ENCODE measurements at regions of chr17 and their contacts with region 1.

Region 1: DNA sequence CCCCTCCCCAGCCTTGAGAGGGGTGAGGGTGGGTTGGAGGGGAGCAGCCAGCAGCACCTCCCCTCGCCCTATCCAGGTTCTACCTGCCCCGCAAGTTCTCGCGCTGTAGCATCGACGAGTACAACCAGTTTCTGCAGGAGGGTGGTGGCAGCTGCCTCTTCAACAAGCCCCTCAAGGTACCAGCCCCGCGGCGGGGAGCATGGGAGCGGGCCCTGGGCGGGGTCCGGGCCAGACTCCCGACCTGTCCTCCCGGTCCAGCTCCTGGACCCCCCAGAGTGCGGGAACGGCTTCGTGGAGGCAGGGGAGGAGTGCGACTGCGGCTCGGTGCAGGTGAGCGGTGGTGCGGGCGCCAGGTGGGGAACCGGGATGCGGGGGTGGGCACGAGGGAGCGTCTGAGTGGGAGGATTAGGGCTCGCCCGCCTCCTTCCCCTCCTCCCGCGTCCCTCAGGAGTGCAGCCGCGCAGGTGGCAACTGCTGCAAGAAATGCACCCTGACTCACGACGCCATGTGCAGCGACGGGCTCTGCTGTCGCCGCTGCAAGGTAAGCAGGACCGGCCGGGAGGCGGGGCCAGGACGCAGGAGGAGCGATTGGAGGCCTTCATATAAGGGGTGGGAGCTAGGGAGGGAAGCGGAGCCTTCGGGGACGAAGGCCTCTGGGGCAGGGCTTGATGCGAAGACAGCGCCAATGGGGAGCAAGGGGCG is 16.5 kb downstream of the ADAM11 start:
- DNase-seq: peak; percentile 98
- ATAC-seq: peak; percentile 96

Region 2: GRCh38 chr17:44689477-44690217 is 85.6 kb before region 1 on chr17 and contains the start of gene CCDC43:
- intact Hi-C with region 1: no loop called
- DNase-seq: peak; percentile 95
- ATAC-seq: peak; percentile 99
- total RNA-seq, gene CCDC43: 25.6 TPM

Region 3: DNA sequence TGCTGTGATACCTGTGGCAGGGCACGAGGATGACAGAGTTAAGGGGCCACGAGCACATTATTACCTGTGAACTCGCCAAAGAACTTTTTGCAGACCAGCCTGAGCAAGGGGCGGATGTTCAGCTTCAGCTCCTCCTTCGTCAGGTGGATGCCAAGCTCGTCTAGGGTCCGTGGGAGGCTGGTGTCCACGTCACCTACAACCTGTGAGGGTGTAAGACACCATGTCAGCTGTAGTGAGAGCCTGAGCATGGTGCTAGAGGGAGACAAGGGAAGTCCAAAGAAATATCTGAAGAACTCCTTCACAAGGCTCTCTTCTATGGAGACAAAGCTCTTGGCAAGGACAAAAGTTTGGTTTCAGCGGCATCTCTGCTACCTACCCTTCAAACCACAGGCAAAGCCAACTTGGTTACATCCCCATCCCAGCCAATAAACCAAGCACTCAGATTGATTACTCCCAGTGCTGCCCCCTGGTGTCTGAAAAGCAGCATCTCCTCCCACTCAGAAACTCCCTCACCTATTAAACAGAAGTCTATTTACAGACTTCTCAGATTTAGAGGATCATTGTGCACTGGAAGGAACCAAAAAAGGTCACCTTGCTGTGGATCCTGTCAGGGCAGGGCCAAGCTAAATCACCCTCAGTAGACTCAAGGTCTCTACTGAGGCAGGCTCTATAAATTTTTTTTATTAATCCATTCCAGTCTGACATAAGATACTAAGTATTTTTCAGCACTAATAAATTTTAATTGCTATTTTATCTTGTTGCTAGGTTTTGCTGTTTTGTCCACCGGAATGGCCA is 89.8 kb after region 1 on chr17:
- intact Hi-C with region 1: loop called (anchors 1 kb)
- DNase-seq: peak; percentile 78
- ATAC-seq: peak; percentile 61

Region 4: GRCh38 chr17:44878627-44879221 is 103.4 kb after region 1 on chr17:
- intact Hi-C with region 1: loop called (anchors 1 kb)
- DNase-seq: no peak
- ATAC-seq: no peak

Region 5: GRCh38 chr17:45040459-45040858 is 265.2 kb after region 1 on chr17:
- intact Hi-C with region 1: loop called (anchors 5 kb)
- DNase-seq: no peak
- ATAC-seq: no peak

Region 6: GRCh38 chr17:45073414-45074070 is 298.3 kb after region 1 on chr17:
- intact Hi-C with region 1: no loop called
- DNase-seq: no peak
- ATAC-seq: peak; percentile 78

Region 7: GRCh38 chr17:45108595-45109521 is 333.6 kb after region 1 on chr17:
- intact Hi-C with region 1: loop called (anchors 10 kb)
- DNase-seq: no peak
- ATAC-seq: no peak

Measured in Right ventricle myocardium inferior (tissue), 1 donor.